Naive thymus-derived CD8-positive, alpha-beta T cell (primary cell): ENCODE measurements at regions of chr16 and their contacts with region 1.

Region 1: DNA sequence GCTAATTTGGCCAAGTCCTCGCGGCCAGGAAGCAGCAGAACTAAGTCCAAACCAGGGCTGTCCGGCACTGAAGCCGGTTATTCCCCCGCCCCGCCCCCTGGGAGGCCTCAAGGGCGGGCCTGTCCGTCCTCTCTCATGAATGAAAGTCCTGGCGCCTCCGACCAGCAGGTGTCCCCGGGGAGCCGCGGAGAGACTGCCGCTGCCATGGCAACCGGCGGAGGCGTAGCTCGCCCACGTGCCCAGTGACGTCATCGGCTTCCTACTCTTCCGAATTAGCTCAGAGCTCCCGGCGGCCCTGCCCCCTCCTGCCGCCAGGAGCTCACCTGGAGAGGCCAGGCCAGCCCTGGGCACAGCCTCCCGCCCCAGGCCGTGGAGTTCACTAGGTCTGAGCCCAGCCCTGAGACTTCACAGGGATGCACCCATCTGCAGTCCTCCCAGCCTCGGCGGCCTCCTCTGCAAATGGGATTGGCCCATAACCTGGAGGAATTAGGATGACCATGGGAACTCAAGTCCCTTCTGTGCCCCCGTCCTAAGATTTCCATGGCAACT is 1.3 kb downstream of the SPATA2L start:
- DNase-seq: peak; percentile 91 to 98 (median 94)
- ATAC-seq: peak; percentile 12 to 22
- H3K4me3 Mint-ChIP-seq: peak overlapping the region; percentile 47 to 85 (median 74)
- H3K27ac Mint-ChIP-seq: peak overlapping the region in 9 of 10 donors; percentile 53 to 93 (median 89)
- H3K4me1 Mint-ChIP-seq: peaks cover 6 to 39% (median 19%) of the 10 kb centered on the region in 4 donors
- H3K27me3 Mint-ChIP-seq: no peaks in the 10 kb centered on the region

Region 2: GRCh38 chr16:89641458-89642119 is 58.6 kb before region 1 on chr16:
- POLR2A ChIA-PET with region 1: no interaction called
- DNase-seq: no peak
- ATAC-seq: no peak
- H3K4me3 Mint-ChIP-seq: peak overlapping the region in 6 of 10 donors; percentile 76 to 85 (median 78)
- H3K27ac Mint-ChIP-seq: peak overlapping the region in 3 of 10 donors; percentile 15 to 69 (median 54)
- H3K4me1 Mint-ChIP-seq: peaks cover 6 to 10% (median 9%) of the 10 kb centered on the region in 4 donors
- H3K27me3 Mint-ChIP-seq: peaks cover 0 to 6% (median 0%) of the 10 kb centered on the region in 5 donors

Region 3: DNA sequence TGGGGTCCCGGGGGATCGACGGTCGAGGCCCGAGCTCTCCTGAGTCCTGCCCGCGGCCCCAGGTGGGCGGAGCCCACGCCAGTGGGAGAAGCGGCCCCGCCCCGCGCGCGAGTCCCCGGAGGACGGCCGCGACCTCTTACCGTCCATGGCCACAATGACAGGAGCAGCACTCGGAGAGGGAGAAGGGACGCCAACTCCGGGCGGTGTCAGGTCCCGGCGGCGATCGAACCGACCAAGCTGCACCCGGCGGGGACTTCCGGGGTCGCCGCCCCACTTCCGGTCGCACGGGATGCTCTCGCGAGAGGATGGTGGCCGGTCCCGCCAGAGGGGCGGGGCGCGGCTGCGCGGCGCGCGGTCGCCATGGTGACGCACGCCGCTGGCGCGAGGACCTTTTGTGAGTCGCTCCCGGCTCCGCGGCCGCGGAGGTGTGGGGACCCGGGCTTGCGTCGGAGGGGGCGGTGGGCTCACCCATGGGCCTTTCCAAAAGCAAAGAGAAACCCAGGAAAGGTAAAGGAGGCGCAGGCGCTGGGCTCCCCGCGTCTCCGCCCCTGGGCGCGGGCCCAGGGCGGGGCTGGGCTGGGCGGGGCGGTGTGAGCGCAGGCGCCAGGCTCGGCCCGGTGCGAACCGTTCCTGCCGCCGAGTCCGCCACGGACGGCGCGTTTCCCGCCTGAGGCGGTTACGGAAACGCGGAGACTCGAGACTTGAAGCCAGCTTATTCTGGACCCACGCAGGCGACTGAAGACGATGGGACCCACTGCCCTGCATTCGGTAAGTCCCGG is 42.5 kb before region 1 on chr16 and contains the starts of genes CHMP1A and SPATA33:
- POLR2A ChIA-PET with region 1: interaction called, 12 read pairs
- DNase-seq: peak; percentile 88 to 98 (median 94)
- ATAC-seq: peak; percentile 91
- H3K4me3 Mint-ChIP-seq: peak within 1 kb of the TSS; percentile 79 to 88 (median 86)
- H3K27ac Mint-ChIP-seq: peak within 1 kb of the TSS; percentile 68 to 91 (median 86)
- H3K4me1 Mint-ChIP-seq: peaks cover 11 to 44% (median 31%) of the 10 kb centered on the region in 4 donors
- H3K27me3 Mint-ChIP-seq: no peaks in the 10 kb centered on the region
- polyA plus RNA-seq, gene CHMP1A: 48.9 to 58.3 (median 52.7) TPM
- polyA plus RNA-seq, gene SPATA33: 1.7 to 3.0 (median 2.3) TPM

Region 4: GRCh38 chr16:89686520-89687091 is 13.6 kb before region 1 on chr16 and contains the start of gene CDK10:
- POLR2A ChIA-PET with region 1: interaction called, 36 read pairs
- DNase-seq: peak; percentile 80 to 98 (median 88)
- ATAC-seq: peak; percentile 90 to 93
- H3K4me3 Mint-ChIP-seq: peak within 1 kb of the TSS; percentile 86 to 96 (median 92)
- H3K27ac Mint-ChIP-seq: peak within 1 kb of the TSS; percentile 22 to 96 (median 92)
- H3K4me1 Mint-ChIP-seq: peaks cover 8 to 25% (median 15%) of the 10 kb centered on the region in 4 donors
- H3K27me3 Mint-ChIP-seq: no peaks in the 10 kb centered on the region
- polyA plus RNA-seq, gene CDK10: 25.4 to 63.3 (median 27.3) TPM

Region 5: GRCh38 chr16:89711601-89712273 is 11.6 kb after region 1 on chr16:
- POLR2A ChIA-PET with region 1: interaction called, 262 read pairs
- DNase-seq: peak; percentile 74 to 89 (median 85)
- ATAC-seq: peak; percentile 89 to 91
- H3K4me3 Mint-ChIP-seq: peak overlapping the region; percentile 46 to 83 (median 69)
- H3K27ac Mint-ChIP-seq: no peak overlapping the region
- H3K4me1 Mint-ChIP-seq: peaks cover 0 to 10% (median 2%) of the 10 kb centered on the region in 4 donors
- H3K27me3 Mint-ChIP-seq: no peaks in the 10 kb centered on the region

Region 6: DNA sequence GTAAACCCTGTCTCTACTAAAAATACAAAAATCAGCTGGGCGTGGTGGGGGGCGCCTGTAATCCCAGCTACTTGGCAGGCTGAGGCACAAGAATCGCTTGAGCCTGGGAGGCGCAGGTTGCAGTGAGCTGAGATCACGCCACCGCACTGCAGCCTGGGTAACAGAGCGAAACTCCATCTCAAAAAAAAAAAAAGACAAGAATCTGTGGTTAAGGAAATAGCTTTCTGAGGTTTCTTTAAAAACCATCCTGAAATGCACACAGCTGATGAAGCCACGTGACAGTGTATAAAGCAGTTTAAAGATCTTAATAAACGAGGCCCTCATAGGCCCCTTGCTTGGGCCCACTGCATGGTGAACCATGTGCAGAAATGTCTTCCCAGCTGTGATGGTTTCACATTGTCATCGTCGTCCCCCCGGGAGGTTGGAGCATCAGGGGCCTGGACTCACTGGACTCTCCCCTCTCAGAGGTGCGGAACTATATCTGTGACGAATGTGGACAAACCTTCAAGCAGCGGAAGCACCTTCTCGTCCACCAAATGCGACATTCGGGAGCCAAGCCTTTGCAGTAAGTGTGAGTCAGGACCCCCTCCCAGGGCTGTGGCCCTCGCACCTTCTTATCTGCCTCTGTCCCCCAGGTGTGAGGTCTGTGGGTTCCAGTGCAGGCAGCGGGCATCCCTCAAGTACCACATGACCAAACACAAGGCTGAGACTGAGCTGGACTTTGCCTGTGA is 37.3 kb after region 1 on chr16:
- POLR2A ChIA-PET with region 1: interaction called, 13 read pairs
- DNase-seq: peak in 8 of 10 donors; percentile 37 to 79 (median 58)
- ATAC-seq: peak; percentile 72 to 88
- H3K4me3 Mint-ChIP-seq: peak overlapping the region; percentile 26 to 83 (median 54)
- H3K27ac Mint-ChIP-seq: peak overlapping the region; percentile 60 to 92 (median 82)
- H3K4me1 Mint-ChIP-seq: peaks cover 17 to 75% (median 33%) of the 10 kb centered on the region in 4 donors
- H3K27me3 Mint-ChIP-seq: no peaks in the 10 kb centered on the region

Region 7: DNA sequence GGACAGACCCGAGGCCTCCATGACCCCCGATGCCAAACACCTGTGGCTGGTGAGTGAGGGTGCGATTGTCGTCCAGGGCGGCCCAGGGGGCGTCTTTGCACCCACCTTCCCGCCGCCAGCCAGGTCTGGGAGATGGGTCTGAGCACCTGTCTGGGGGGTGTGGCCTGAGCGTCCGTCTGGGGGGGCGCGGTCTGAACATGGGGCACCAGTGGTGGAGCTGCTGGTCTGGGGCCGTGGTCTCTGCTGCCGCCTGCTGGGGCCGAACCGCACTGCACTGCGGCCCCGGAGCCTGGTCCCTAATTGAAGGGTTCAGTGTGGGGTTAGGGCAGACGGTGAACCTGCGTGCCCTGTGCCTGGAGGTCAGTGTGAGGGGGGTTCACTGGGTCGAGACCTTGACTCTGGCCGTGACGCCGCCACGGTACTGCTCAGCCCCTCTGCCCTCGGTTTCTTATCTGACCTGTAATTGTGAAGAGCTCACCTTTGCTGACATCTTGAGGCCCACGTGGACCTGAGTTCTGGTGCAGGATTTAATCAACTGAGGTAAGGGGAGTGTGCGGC is 160.7 kb after region 1 on chr16:
- POLR2A ChIA-PET with region 1: interaction called, 19 read pairs
- DNase-seq: peak; percentile 63 to 85 (median 74)
- ATAC-seq: peak; percentile 84 to 89
- H3K4me3 Mint-ChIP-seq: peak overlapping the region in 2 of 10 donors; percentile 17 to 34
- H3K27ac Mint-ChIP-seq: peak overlapping the region in 6 of 10 donors; percentile 8 to 85 (median 72)
- H3K4me1 Mint-ChIP-seq: peaks cover 18 to 40% (median 36%) of the 10 kb centered on the region in 4 donors
- H3K27me3 Mint-ChIP-seq: no peaks in the 10 kb centered on the region

Region 8: DNA sequence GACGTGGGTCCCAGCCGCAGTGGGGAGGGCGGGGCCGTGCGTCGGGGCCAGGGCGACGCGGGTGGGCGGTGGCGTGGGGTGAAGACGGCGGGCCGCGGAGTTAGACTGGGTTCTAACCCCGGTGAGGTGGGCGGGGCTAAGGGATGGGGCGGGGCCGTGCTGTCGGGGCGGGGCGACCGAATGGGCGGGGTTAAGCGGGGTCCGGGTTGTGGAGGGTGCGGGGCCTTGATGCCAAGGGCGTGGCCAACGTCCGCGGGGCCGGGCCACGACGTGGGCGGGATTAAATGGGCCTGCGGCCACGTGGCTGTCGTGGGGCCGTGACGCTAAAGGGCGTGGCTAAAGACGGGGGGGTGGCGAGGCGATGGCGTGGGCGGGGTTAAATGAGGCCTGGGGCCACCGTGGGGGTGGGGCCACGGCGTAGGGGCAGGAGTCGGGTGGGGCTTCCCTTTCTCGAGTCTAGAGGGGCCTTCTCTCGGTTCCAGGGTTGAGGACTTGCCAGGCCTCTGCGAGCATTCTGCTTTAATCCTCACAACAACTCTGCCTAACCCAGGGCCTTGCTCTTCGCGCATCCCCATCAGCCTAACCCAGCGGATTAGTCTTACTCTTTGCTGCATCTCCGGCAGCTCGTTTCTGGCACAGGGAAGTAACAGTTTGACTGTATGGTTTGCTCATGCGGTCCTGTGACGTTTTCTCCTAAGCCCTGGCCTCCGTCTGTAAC is 174.0 kb after region 1 on chr16:
- POLR2A ChIA-PET with region 1: interaction called, 23 read pairs
- DNase-seq: peak; percentile 89 to 96 (median 92)
- ATAC-seq: peak; percentile 70 to 82
- H3K4me3 Mint-ChIP-seq: peak overlapping the region; percentile 83 to 96 (median 91)
- H3K27ac Mint-ChIP-seq: peak overlapping the region; percentile 63 to 99 (median 98)
- H3K4me1 Mint-ChIP-seq: peaks cover 3 to 26% (median 21%) of the 10 kb centered on the region in 4 donors
- H3K27me3 Mint-ChIP-seq: no peaks in the 10 kb centered on the region